ENCODE measurements at regions of chr7 and their contacts with region 1.

Region 1: GRCh38 chr7:116443101-116443523 is 56.4 kb upstream of the CAV2 start:
- DNase-seq: peak; percentile 98
- ATAC-seq: peak; percentile 73
- H3K4me3 ChIP-seq: no peak overlapping the region
- H3K27ac ChIP-seq: peak overlapping the region; percentile 91
- H3K4me1 ChIP-seq: peaks cover 57% of the 10 kb centered on the region
- H3K27me3 ChIP-seq: no peaks in the 10 kb centered on the region
- CTCF ChIP-seq: no peak

Region 2: GRCh38 chr7:116236020-116236630 is 207.0 kb before region 1 on chr7:
- CTCF ChIA-PET with region 1: no interaction called
- POLR2A ChIA-PET with region 1: no interaction called
- intact Hi-C with region 1: no loop called
- DNase-seq: peak; percentile 70
- ATAC-seq: peak; percentile 42
- H3K4me3 ChIP-seq: no peak overlapping the region
- H3K27ac ChIP-seq: no peak overlapping the region
- H3K4me1 ChIP-seq: peaks cover 26% of the 10 kb centered on the region
- H3K27me3 ChIP-seq: no peaks in the 10 kb centered on the region
- CTCF ChIP-seq: peak; percentile 72

Region 3: GRCh38 chr7:116277070-116277469 is 166.0 kb before region 1 on chr7:
- CTCF ChIA-PET with region 1: no interaction called
- POLR2A ChIA-PET with region 1: no interaction called
- intact Hi-C with region 1: no loop called
- DNase-seq: no peak
- ATAC-seq: no peak
- H3K4me3 ChIP-seq: no peak overlapping the region
- H3K27ac ChIP-seq: no peak overlapping the region
- H3K4me1 ChIP-seq: peaks cover 22% of the 10 kb centered on the region
- H3K27me3 ChIP-seq: no peaks in the 10 kb centered on the region
- CTCF ChIP-seq: no peak

Region 4: GRCh38 chr7:116290740-116291139 is 152.4 kb before region 1 on chr7:
- CTCF ChIA-PET with region 1: no interaction called
- POLR2A ChIA-PET with region 1: interaction called, 12 read pairs
- intact Hi-C with region 1: no loop called
- DNase-seq: no peak
- ATAC-seq: 0 out of 2 replicates have a peak, but pooled peaks have one; percentile 16
- H3K4me3 ChIP-seq: no peak overlapping the region
- H3K27ac ChIP-seq: no peak overlapping the region
- H3K4me1 ChIP-seq: peaks cover 11% of the 10 kb centered on the region; the same call in 1 of the 2 replicates
- H3K27me3 ChIP-seq: no peaks in the 10 kb centered on the region
- CTCF ChIP-seq: no peak

Region 5: GRCh38 chr7:116461500-116461899 is 18.4 kb after region 1 on chr7:
- CTCF ChIA-PET with region 1: no interaction called
- POLR2A ChIA-PET with region 1: interaction called, 15 read pairs
- intact Hi-C with region 1: no loop called
- DNase-seq: peak; percentile 24
- ATAC-seq: peak; percentile 37
- H3K4me3 ChIP-seq: peak overlapping the region; percentile 39; the same call in 1 of the 2 replicates
- H3K27ac ChIP-seq: peak overlapping the region; percentile 38
- H3K4me1 ChIP-seq: peaks cover 38% of the 10 kb centered on the region
- H3K27me3 ChIP-seq: no peaks in the 10 kb centered on the region
- CTCF ChIP-seq: peak; percentile 38; the same call in 1 of the 2 replicates

Region 6: GRCh38 chr7:116588641-116589594 is 145.8 kb after region 1 on chr7:
- CTCF ChIA-PET with region 1: interaction called, 6 read pairs
- POLR2A ChIA-PET with region 1: interaction called, 4 read pairs
- intact Hi-C with region 1: loop called (anchors 2 kb)
- DNase-seq: peak; percentile 88
- ATAC-seq: peak; percentile 49
- H3K4me3 ChIP-seq: no peak overlapping the region
- H3K27ac ChIP-seq: peak overlapping the region; percentile 3; the same call in 1 of the 2 replicates
- H3K4me1 ChIP-seq: peaks cover 26% of the 10 kb centered on the region
- H3K27me3 ChIP-seq: no peaks in the 10 kb centered on the region
- CTCF ChIP-seq: peak; percentile 87

Region 7: DNA sequence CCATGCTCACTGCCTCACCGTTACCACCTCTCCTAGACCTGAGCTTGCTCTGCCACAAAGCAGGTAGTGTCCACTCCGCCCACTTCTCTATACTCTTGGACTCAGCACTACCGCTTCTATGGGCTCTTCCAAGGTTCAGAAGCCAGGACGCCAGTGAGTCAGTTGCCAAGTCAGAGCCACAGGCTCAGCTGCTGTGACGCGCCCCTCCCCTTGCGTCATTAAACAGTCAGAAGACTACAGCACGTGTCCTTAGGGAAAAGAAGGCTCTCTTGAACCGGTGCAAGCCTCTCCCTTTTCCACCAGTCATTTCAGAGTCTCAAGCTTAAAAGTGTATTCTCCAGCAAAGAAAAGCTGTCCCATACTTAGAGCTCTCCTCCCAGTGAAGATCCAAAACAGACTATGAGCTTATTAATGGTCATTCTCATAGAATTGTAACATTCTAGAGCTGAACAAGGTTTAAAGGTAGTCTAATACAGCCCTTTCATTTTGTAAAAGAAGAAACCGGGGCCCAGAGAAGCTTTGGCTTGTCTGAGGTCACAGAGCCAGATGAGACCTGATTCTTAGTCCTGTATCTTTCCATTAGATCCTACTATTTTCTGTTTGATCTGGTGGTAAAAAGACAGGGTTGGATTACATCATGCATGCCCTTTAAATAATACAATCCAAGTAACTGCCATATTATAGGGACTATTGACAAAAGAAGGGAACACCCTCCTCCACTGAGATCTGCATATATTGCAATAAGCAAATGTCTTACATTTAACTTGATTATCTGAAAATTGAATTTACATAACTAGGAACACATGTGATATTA is 188.0 kb after region 1 on chr7:
- CTCF ChIA-PET with region 1: no interaction called
- POLR2A ChIA-PET with region 1: no interaction called
- intact Hi-C with region 1: no loop called
- DNase-seq: peak; percentile 83
- ATAC-seq: peak; percentile 78
- H3K4me3 ChIP-seq: no peak overlapping the region
- H3K27ac ChIP-seq: peak overlapping the region; percentile 56
- H3K4me1 ChIP-seq: peaks cover 36% of the 10 kb centered on the region
- H3K27me3 ChIP-seq: no peaks in the 10 kb centered on the region
- CTCF ChIP-seq: no peak

Region 8: DNA sequence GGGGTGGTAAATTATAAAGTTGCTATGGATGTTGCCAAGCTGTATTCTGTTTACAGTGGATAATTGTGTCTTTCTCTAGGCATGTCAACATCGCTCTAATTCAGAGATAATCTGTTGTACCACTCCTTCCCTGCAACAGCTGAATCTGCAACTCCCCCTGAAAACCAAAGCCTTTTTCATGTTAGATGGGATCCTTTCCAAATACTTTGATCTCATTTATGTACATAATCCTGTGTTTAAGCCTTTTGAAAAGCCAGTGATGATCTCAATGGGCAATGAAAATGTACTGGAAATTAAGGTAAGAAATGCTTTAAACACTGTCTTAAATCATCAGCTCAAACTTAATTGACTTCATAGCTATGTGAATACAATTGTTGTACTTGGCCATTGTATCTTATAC is 319.9 kb after region 1 on chr7:
- CTCF ChIA-PET with region 1: no interaction called
- POLR2A ChIA-PET with region 1: no interaction called
- intact Hi-C with region 1: no loop called
- DNase-seq: no peak
- ATAC-seq: no peak
- H3K4me3 ChIP-seq: no peak overlapping the region
- H3K27ac ChIP-seq: no peak overlapping the region
- H3K4me1 ChIP-seq: no peaks in the 10 kb centered on the region
- H3K27me3 ChIP-seq: no peaks in the 10 kb centered on the region
- CTCF ChIP-seq: no peak

Region 9: DNA sequence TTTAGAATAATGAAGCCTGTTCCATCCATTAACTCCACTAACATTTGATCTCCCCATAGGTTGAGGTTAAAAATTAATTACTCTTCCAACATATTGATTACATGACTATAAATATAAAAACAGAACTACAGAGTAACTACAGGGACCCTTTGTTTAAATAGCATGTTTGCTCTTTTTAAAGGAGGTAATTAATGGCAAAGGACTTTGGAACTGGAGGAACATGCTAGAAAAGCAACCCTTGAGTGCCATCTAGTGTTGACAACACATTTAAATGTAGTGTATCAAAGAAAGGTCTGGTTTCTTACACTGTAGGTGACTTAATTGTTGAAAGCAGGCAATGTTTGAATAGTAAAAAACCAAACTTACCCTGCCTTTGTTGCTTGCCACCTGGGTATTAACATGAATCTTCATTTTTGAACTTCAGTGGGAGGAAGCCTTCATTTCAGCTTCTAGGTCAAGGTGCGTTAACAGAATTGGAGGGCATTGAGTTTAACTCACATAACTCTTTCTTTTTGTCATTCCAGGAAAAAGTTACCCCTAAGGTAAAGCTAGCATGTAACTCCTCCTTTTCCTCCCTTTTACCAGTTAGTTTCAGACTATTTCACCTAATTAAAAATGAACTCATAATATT is 366.6 kb after region 1 on chr7:
- CTCF ChIA-PET with region 1: interaction called, 7 read pairs
- POLR2A ChIA-PET with region 1: no interaction called
- intact Hi-C with region 1: loop called (anchors 10 kb)
- DNase-seq: peak; percentile 87
- ATAC-seq: peak; percentile 82
- H3K4me3 ChIP-seq: peak overlapping the region; percentile 42
- H3K27ac ChIP-seq: peak overlapping the region; percentile 76
- H3K4me1 ChIP-seq: peaks cover 38% of the 10 kb centered on the region
- H3K27me3 ChIP-seq: no peaks in the 10 kb centered on the region
- CTCF ChIP-seq: peak; percentile 85